Calu3 (cell line): ENCODE measurements at regions of chr3 and their contacts with region 1.

Region 1: DNA sequence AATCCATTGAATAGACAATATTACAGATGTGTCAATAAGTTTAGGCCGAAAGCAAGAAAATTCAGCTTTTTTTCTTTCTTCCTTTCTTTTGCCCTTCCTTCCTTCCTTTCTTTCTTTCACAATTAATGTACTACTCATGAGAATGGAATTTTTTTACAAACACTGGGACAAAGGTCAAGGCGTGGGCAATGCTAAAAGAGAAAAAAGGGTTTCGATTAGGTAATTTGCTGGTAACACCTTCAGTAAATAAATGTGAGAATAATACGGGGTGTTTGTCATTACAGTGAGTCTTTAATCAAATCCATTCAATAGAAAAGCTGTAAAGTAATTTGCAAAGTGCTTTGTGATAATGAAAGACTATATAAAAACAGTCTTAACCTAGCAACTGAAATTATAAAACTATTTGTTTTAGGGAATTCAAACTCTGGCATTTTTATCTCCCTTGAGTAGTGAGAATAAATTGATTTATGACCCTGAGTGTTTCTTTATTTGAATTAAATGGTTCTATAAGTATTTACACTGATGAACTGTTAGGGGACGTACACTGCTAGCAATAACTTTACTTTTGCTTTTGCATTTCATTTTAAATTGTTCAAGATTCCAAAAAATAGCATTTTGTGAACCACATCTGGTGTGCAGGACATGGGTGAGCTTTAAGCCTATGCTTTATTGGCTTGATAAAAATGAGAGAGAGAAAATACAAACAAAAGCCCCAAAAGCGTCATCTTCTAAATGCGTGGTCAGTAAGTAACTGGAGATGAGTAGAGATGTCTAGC is 104.2 kb upstream of the THRB start:
- DNase-seq: peak; percentile 55
- H3K4me3 Mint-ChIP-seq: peak overlapping the region; percentile 3
- H3K27ac Mint-ChIP-seq: peak overlapping the region; percentile 86
- H3K4me1 Mint-ChIP-seq: peaks cover 54% of the 10 kb centered on the region
- H3K27me3 Mint-ChIP-seq: no peaks in the 10 kb centered on the region
- CTCF ChIP-seq: no peak

Region 2: DNA sequence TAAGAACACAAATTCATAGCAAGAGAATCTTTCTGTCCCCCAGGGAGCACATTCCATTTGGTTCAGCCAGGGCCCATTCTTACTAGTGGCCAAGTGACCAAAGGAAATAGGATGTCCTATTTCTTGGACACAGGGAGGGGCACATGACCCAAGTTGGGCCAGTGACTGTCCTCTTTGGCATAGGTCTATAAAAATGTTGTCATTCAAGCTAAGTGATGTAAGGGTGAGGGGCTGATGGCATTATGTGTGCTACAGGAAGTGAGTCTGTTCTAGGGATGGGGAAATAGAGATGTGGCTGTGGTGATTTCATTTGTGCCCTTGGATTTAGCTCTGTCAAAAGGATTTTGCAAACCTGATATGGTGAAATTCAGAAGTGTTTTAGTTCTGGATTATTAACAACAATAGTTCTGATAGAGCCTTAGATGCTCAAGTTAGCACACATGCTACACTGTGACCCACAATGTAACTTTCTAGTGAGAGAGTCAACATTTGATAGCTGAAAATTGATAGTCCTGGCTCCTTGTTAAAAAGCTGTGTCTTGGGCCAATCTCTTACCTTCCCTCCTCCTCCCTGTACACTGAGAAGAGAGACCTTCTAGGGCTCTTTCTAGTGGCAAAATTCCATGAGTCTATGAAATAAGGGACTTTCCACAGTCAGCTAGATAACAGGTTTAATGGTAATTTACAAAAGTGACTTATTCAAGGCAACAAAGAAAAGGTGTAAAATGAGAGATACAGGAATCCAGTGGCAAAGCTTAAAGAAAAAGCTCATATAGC is 221.5 kb before region 1 on chr3:
- CTCF ChIA-PET with region 1: no interaction called
- intact Hi-C with region 1: no loop called
- DNase-seq: no peak
- H3K4me3 Mint-ChIP-seq: no peak overlapping the region
- H3K27ac Mint-ChIP-seq: no peak overlapping the region
- H3K4me1 Mint-ChIP-seq: peaks cover 37% of the 10 kb centered on the region
- H3K27me3 Mint-ChIP-seq: no peaks in the 10 kb centered on the region
- CTCF ChIP-seq: no peak

Region 3: GRCh38 chr3:24521420-24522145 is 77.3 kb before region 1 on chr3:
- CTCF ChIA-PET with region 1: no interaction called
- intact Hi-C with region 1: loop called (anchors 5 kb)
- DNase-seq: peak; percentile 59
- H3K4me3 Mint-ChIP-seq: peak overlapping the region; percentile 67
- H3K27ac Mint-ChIP-seq: no peak overlapping the region
- H3K4me1 Mint-ChIP-seq: peaks cover 47% of the 10 kb centered on the region
- H3K27me3 Mint-ChIP-seq: no peaks in the 10 kb centered on the region
- CTCF ChIP-seq: no peak